CD4-positive, alpha-beta memory T cell (primary cell): ENCODE measurements at regions of chr1 and their contacts with region 1.

Region 1: DNA sequence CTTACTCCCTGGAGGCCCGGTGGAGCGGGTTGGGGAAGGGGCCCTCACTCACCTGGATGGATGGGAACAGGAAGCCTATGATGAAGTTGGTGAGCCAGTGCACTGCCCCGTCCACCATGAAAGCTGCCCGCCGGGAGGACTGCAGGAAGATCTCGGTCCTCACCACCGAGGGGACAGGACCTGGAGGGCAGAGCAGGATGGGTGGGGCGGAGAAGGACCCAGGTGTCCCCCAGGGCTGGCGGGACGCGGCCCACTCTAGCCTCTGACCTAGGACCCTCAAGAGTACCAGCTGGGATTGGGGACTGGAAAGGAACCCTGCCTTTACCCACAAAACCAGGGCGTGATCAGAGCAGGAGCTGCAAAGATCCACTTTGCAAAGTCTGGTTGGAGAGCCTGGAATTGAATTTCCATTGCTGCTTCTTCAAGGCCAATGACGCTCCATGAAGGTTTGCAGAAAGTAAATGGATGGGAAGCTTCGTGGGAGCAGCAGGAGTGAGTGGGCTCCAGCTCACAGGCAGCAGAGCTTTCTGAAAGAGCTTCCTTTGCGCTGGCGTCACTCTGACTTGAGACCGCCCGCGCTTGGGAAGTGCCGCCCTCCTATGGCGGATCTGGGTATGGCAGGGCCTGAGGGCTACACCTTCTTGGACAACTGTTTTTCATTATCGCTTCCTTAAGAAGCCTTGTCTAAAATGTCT is 21.4 kb downstream of the SLC2A7 start:
- DNase-seq: peak; percentile 60 to 74 (median 68)
- H3K4me3 ChIP-seq: no peak overlapping the region
- H3K4me3 Mint-ChIP-seq: peak overlapping the region in 3 of 8 donors; percentile 21 to 54 (median 31)
- H3K27ac ChIP-seq: no peak overlapping the region
- H3K27ac Mint-ChIP-seq: peak overlapping the region in 1 of 7 donors; percentile 23
- H3K4me1 ChIP-seq: peaks cover 8% of the 10 kb centered on the region
- H3K4me1 Mint-ChIP-seq: peaks cover 0 to 6% (median 3%) of the 10 kb centered on the region in 4 donors
- H3K27me3 ChIP-seq: no peaks in the 10 kb centered on the region
- H3K27me3 Mint-ChIP-seq: no peaks in the 10 kb centered on the region

Region 2: GRCh38 chr1:8911416-8911815 is 93.4 kb before region 1 on chr1:
- CTCF ChIA-PET with region 1: interaction called, 78 read pairs
- POLR2A ChIA-PET with region 1: no interaction called
- intact Hi-C with region 1: no loop called
- DNase-seq: no peak
- H3K4me3 ChIP-seq: no peak overlapping the region
- H3K4me3 Mint-ChIP-seq: no peak overlapping the region
- H3K27ac ChIP-seq: no peak overlapping the region
- H3K27ac Mint-ChIP-seq: peak overlapping the region in 1 of 7 donors; percentile 47
- H3K4me1 ChIP-seq: no peaks in the 10 kb centered on the region
- H3K4me1 Mint-ChIP-seq: no peaks in the 10 kb centered on the region
- H3K27me3 ChIP-seq: no peaks in the 10 kb centered on the region
- H3K27me3 Mint-ChIP-seq: peaks cover 0 to 6% of the 10 kb centered on the region in 2 donors

Region 3: GRCh38 chr1:8962812-8963530 is 41.9 kb before region 1 on chr1:
- CTCF ChIA-PET with region 1: interaction called, 19 read pairs
- POLR2A ChIA-PET with region 1: no interaction called
- intact Hi-C with region 1: no loop called
- DNase-seq: no peak
- H3K4me3 ChIP-seq: no peak overlapping the region
- H3K4me3 Mint-ChIP-seq: peak overlapping the region in 5 of 8 donors; percentile 3 to 64 (median 51)
- H3K27ac ChIP-seq: no peak overlapping the region
- H3K27ac Mint-ChIP-seq: peak overlapping the region in 5 of 7 donors; percentile 34 to 74 (median 57)
- H3K4me1 ChIP-seq: peaks cover 29% of the 10 kb centered on the region
- H3K4me1 Mint-ChIP-seq: peaks cover 26 to 63% (median 38%) of the 10 kb centered on the region in 4 donors
- H3K27me3 ChIP-seq: no peaks in the 10 kb centered on the region
- H3K27me3 Mint-ChIP-seq: peaks cover 0 to 3% of the 10 kb centered on the region in 2 donors

Region 4: GRCh38 chr1:8987881-8988617 is 16.8 kb before region 1 on chr1:
- CTCF ChIA-PET with region 1: interaction called, 70 read pairs
- POLR2A ChIA-PET with region 1: no interaction called
- intact Hi-C with region 1: no loop called
- DNase-seq: peak; percentile 45 to 63 (median 51)
- H3K4me3 ChIP-seq: peak overlapping the region in 1 of 2 donors; percentile 15
- H3K4me3 Mint-ChIP-seq: peak overlapping the region in 7 of 8 donors; percentile 43 to 69 (median 62)
- H3K27ac ChIP-seq: no peak overlapping the region
- H3K27ac Mint-ChIP-seq: peak overlapping the region in 6 of 7 donors; percentile 35 to 80 (median 60)
- H3K4me1 ChIP-seq: peaks cover 19% of the 10 kb centered on the region
- H3K4me1 Mint-ChIP-seq: peaks cover 8 to 31% (median 23%) of the 10 kb centered on the region in 4 donors
- H3K27me3 ChIP-seq: no peaks in the 10 kb centered on the region
- H3K27me3 Mint-ChIP-seq: peaks cover 0 to 2% of the 10 kb centered on the region in 2 donors

Region 5: GRCh38 chr1:10965546-10966226 is 1960.8 kb after region 1 on chr1:
- CTCF ChIA-PET with region 1: no interaction called
- POLR2A ChIA-PET with region 1: no interaction called
- intact Hi-C with region 1: no loop called
- DNase-seq: peak in 3 of 5 donors; percentile 2 to 58 (median 16)
- H3K4me3 ChIP-seq: no peak overlapping the region
- H3K4me3 Mint-ChIP-seq: peak overlapping the region in 6 of 8 donors; percentile 5 to 71 (median 48)
- H3K27ac ChIP-seq: no peak overlapping the region
- H3K27ac Mint-ChIP-seq: peak overlapping the region in 1 of 7 donors; percentile 36
- H3K4me1 ChIP-seq: peaks cover 6% of the 10 kb centered on the region
- H3K4me1 Mint-ChIP-seq: peaks cover 8 to 13% (median 11%) of the 10 kb centered on the region in 4 donors
- H3K27me3 ChIP-seq: no peaks in the 10 kb centered on the region
- H3K27me3 Mint-ChIP-seq: peaks cover 5 to 12% of the 10 kb centered on the region in 2 donors